ENCODE measurements at regions of chr15 and their contacts with region 1.

Region 1: DNA sequence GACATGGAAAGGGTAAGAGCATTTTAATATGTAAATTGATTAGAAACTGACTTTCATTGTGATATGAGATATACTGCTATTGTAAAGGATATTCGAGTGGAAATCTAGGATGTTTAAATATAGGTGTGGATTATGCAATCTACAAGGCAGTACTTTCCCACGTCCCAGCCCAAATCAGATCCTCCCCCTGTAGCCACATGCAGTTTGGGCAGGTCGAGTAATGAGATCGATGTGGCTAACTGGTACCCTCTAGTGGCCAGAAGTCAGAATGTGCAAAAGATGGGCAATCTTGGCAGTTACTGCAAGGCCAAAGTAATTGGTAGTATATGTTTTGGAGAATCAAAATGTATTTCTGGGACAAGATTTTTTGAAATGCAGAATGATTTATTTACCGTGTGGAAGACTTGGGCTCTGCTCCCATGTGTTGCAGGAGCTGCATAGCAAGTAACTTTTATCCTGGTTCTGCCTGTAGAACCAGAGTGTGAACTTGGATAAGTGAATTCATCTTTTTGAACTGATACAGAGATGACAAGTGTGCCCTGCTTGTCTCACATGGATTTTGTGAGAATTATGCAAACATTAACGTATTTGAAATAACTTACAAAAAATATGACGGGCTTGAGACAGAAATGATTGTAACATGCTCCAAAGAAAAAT is 94.5 kb upstream of the ADAMTSL3 start:
- DNase-seq: peak in 11 of 14 experiments; percentile 3 to 53 (median 11)
- ATAC-seq: peak; percentile 49
- H3K4me3 ChIP-seq: no peak overlapping the region
- H3K4me3 Mint-ChIP-seq: no peak overlapping the region
- H3K27ac ChIP-seq: no peak overlapping the region
- H3K27ac Mint-ChIP-seq: no peak overlapping the region
- H3K4me1 ChIP-seq: no peaks in the 10 kb centered on the region
- H3K4me1 Mint-ChIP-seq: no peaks in the 10 kb centered on the region
- H3K27me3 ChIP-seq: no peaks in the 10 kb centered on the region
- H3K27me3 Mint-ChIP-seq: peaks cover 13% of the 10 kb centered on the region
- CTCF ChIP-seq: peak; percentile 84

Region 2: GRCh38 chr15:83250801-83251200 is 308.6 kb before region 1 on chr15:
- CTCF ChIA-PET with region 1: no interaction called
- POLR2A ChIA-PET with region 1: no interaction called
- intact Hi-C with region 1: loop called in 1 of 2 experiments (anchors 5 kb)
- DNase-seq: no peak
- ATAC-seq: no peak
- H3K4me3 ChIP-seq: no peak overlapping the region
- H3K4me3 Mint-ChIP-seq: no peak overlapping the region
- H3K27ac ChIP-seq: no peak overlapping the region
- H3K27ac Mint-ChIP-seq: no peak overlapping the region
- H3K4me1 ChIP-seq: no peaks in the 10 kb centered on the region
- H3K4me1 Mint-ChIP-seq: no peaks in the 10 kb centered on the region
- H3K27me3 ChIP-seq: peaks cover 6 to 14% of the 10 kb centered on the region in 2 experiments
- H3K27me3 Mint-ChIP-seq: peaks cover 66% of the 10 kb centered on the region
- CTCF ChIP-seq: no peak

Region 3: GRCh38 chr15:83396101-83396500 is 163.3 kb before region 1 on chr15:
- CTCF ChIA-PET with region 1: no interaction called
- POLR2A ChIA-PET with region 1: no interaction called
- intact Hi-C with region 1: no loop called
- DNase-seq: no peak
- ATAC-seq: no peak
- H3K4me3 ChIP-seq: no peak overlapping the region
- H3K4me3 Mint-ChIP-seq: no peak overlapping the region
- H3K27ac ChIP-seq: no peak overlapping the region
- H3K27ac Mint-ChIP-seq: no peak overlapping the region
- H3K4me1 ChIP-seq: no peaks in the 10 kb centered on the region
- H3K4me1 Mint-ChIP-seq: no peaks in the 10 kb centered on the region
- H3K27me3 ChIP-seq: peaks cover 6 to 7% of the 10 kb centered on the region in 2 experiments
- H3K27me3 Mint-ChIP-seq: peaks cover 38% of the 10 kb centered on the region
- CTCF ChIP-seq: no peak

Region 4: GRCh38 chr15:83436458-83437158 is 122.8 kb before region 1 on chr15:
- CTCF ChIA-PET with region 1: no interaction called
- POLR2A ChIA-PET with region 1: no interaction called
- intact Hi-C with region 1: loop called (anchors 1 to 5 kb)
- DNase-seq: no peak
- ATAC-seq: no peak
- H3K4me3 ChIP-seq: no peak overlapping the region
- H3K4me3 Mint-ChIP-seq: no peak overlapping the region
- H3K27ac ChIP-seq: no peak overlapping the region
- H3K27ac Mint-ChIP-seq: no peak overlapping the region
- H3K4me1 ChIP-seq: no peaks in the 10 kb centered on the region
- H3K4me1 Mint-ChIP-seq: peaks cover 4% of the 10 kb centered on the region
- H3K27me3 ChIP-seq: peaks cover 2 to 8% of the 10 kb centered on the region in 2 experiments
- H3K27me3 Mint-ChIP-seq: peaks cover 32% of the 10 kb centered on the region
- CTCF ChIP-seq: no peak

Region 5: GRCh38 chr15:83940136-83940535 is 380.7 kb after region 1 on chr15:
- CTCF ChIA-PET with region 1: no interaction called
- POLR2A ChIA-PET with region 1: no interaction called
- intact Hi-C with region 1: no loop called
- DNase-seq: no peak
- ATAC-seq: no peak
- H3K4me3 ChIP-seq: no peak overlapping the region
- H3K4me3 Mint-ChIP-seq: no peak overlapping the region
- H3K27ac ChIP-seq: no peak overlapping the region
- H3K27ac Mint-ChIP-seq: no peak overlapping the region
- H3K4me1 ChIP-seq: no peaks in the 10 kb centered on the region
- H3K4me1 Mint-ChIP-seq: no peaks in the 10 kb centered on the region
- H3K27me3 ChIP-seq: peaks cover 0 to 3% of the 10 kb centered on the region in 2 experiments
- H3K27me3 Mint-ChIP-seq: peaks cover 11% of the 10 kb centered on the region
- CTCF ChIP-seq: no peak

Measured in CD4-positive, alpha-beta T cell (primary cell).